ENCODE measurements at regions of chr15 and their contacts with region 1.

Region 1: GRCh38 chr15:78108299-78109084 is 16.1 kb downstream of the SH2D7 start:
- DNase-seq: peak; percentile 93 to 96 (median 96)
- H3K4me3 ChIP-seq: no peak overlapping the region
- H3K27ac ChIP-seq: no peak overlapping the region
- H3K4me1 ChIP-seq: peaks cover 2 to 27% (median 12%) of the 10 kb centered on the region in 4 experiments
- H3K27me3 ChIP-seq: no peaks in the 10 kb centered on the region

Region 2: DNA sequence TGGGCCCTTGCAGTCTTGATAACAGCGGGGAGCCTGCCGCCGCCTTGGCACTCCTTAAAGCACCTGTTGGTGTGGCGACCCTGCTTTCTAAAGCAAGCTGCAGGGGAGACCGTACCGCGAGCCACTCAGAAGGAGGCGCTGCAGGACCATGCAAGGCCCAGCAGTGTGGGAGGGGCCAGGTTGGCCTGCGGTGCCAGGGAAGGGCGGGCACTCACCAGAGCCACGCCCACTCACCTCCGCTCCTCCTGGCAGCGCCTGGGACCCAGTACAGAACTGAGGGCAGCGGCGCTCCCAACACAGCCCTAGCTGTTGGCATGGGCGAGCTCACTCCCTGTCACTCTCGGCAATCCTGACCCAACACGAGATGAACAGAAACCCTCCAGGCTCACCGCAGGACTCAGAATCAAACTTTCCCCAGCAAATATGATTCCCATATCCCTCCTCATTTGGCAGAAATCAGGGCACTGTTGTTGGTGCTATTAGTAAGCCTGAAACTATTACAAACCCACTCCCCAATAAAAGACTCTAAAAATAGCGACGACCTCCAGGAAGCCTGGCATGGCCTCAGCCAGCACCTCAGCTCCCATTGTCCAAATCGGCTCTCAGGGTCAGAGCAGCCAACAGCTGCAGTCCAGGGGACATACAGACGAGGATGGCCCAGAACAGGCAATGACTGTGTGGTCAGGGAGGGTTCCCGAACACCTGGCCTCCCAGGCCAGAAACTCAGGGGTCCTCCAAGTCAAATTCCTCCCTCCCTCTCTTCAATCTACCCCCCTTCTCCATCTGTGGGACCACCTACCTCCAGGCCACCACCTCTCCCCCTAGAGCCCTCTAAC is 108.2 kb before region 1 on chr15:
- CTCF ChIA-PET with region 1: interaction called, 102 read pairs
- POLR2A ChIA-PET with region 1: interaction called, 4 read pairs
- DNase-seq: peak; percentile 84 to 92 (median 87)
- H3K4me3 ChIP-seq: no peak overlapping the region
- H3K27ac ChIP-seq: no peak overlapping the region
- H3K4me1 ChIP-seq: peaks cover 0 to 6% (median under 1%) of the 10 kb centered on the region in 4 experiments
- H3K27me3 ChIP-seq: no peaks in the 10 kb centered on the region

Region 3: DNA sequence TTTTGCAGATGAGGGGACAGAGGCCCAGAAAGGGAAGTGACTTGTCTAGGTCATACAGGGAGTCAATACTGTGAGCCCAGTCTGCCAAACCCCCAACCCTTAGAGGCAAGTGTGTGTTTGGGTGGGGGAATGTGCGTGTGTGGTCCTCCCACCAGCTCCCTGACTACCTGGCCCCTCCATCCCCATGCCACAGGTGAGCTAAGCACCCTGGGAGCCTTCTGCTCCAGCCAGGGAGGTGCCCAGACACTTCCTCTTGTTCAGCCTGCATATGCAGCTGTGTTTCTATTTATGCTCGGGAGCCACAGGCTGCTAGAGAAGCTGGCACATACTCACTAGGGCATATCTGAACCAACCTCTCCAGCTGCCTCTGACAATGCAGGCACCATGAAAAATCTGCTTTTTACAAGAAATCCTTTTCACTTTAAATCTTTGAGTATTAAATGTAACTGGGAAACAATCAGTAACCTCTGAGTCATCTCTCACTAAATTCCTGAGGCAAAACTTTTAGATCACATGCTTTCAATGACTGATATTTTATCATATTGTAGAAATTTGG is 51.7 kb before region 1 on chr15:
- CTCF ChIA-PET with region 1: interaction called, 10 read pairs
- POLR2A ChIA-PET with region 1: no interaction called
- DNase-seq: peak in 2 of 3 donors; percentile 81 to 89
- H3K4me3 ChIP-seq: peak overlapping the region in 2 of 7 experiments; percentile 16 to 33
- H3K27ac ChIP-seq: peak overlapping the region in 1 of 2 experiments; percentile 55
- H3K4me1 ChIP-seq: peaks cover 30 to 91% (median 70%) of the 10 kb centered on the region in 4 experiments
- H3K27me3 ChIP-seq: no peaks in the 10 kb centered on the region

Region 4: GRCh38 chr15:78093242-78094020 is 15.1 kb before region 1 on chr15:
- CTCF ChIA-PET with region 1: interaction called, 37 read pairs
- POLR2A ChIA-PET with region 1: interaction called, 5 read pairs
- DNase-seq: no peak
- H3K4me3 ChIP-seq: no peak overlapping the region
- H3K27ac ChIP-seq: no peak overlapping the region
- H3K4me1 ChIP-seq: peaks cover 0 to 12% (median 8%) of the 10 kb centered on the region in 4 experiments
- H3K27me3 ChIP-seq: no peaks in the 10 kb centered on the region

Region 5: GRCh38 chr15:78167227-78167888 is 58.9 kb after region 1 on chr15:
- CTCF ChIA-PET with region 1: no interaction called
- POLR2A ChIA-PET with region 1: no interaction called
- DNase-seq: peak in 2 of 3 donors; percentile 50 to 54
- H3K4me3 ChIP-seq: no peak overlapping the region
- H3K27ac ChIP-seq: no peak overlapping the region
- H3K4me1 ChIP-seq: peaks cover 7 to 36% (median 17%) of the 10 kb centered on the region in 4 experiments
- H3K27me3 ChIP-seq: no peaks in the 10 kb centered on the region

Region 6: GRCh38 chr15:78195735-78196201 is 87.3 kb after region 1 on chr15:
- CTCF ChIA-PET with region 1: interaction called, 40 read pairs
- POLR2A ChIA-PET with region 1: no interaction called
- DNase-seq: peak; percentile 40 to 58 (median 55)
- H3K4me3 ChIP-seq: no peak overlapping the region
- H3K27ac ChIP-seq: no peak overlapping the region
- H3K4me1 ChIP-seq: no peaks in the 10 kb centered on the region
- H3K27me3 ChIP-seq: peaks cover 0 to 2% (median 0%) of the 10 kb centered on the region in 5 experiments